Esophagus muscularis mucosa (tissue), 4 donors: ENCODE measurements at regions of chr11 and their contacts with region 1.

Region 1: GRCh38 chr11:17230867-17231851 is 23.4 kb upstream of the PIK3C2A start:
- DNase-seq: no peak
- H3K4me3 ChIP-seq: no peak overlapping the region
- H3K27ac ChIP-seq: no peak overlapping the region
- H3K4me1 ChIP-seq: peaks cover 0 to 8% (median 0%) of the 10 kb centered on the region in 4 donors
- H3K27me3 ChIP-seq: no peaks in the 10 kb centered on the region
- CTCF ChIP-seq: no peak
- EP300 ChIP-seq: no peak
- POLR2A ChIP-seq: no peak

Region 2: DNA sequence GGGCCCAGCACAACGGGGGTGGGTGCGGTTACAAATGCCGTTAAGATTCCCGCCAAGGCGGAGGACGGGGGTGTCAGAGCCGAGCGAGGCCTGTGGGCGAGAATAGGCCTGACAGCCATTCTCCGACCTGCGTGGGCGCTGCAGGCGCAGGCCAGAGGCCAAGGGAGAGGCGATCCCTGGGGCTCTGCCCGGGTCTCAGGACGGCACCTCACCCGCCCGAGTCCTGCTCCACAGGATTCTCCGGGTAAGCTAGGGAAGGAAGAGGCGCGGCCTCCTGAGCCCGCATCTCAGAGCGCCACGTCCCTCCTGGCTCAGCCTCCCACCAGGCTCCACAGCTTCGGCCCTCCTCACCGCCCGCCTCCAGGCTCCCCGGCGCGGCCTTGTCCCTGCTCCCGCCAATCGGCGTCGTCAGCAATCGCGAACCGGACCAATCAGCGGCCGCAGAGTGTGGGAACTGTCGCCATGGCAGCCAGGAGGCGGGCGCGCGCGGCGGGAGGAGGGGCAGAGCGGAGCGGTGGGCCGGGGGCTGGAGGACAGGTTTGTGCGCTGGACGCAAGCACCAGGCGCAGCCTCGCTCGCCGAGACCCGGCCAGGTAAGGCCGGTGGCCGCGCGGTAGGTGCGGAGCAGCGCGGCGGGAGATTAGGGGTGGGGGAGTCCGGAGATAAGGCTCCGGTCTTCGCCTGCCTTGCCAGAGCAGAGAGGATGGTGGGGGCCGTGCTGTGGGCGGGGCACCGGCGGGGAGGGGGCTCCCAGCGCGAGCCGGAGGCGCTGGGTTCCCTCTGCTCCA is 45.3 kb after region 1 on chr11 and contains the start of gene NUCB2:
- intact Hi-C with region 1: loop called (anchors 5 kb)
- DNase-seq: peak; percentile 97
- H3K4me3 ChIP-seq: peak within 1 kb of the TSS; percentile 77 to 98 (median 94)
- H3K27ac ChIP-seq: peak within 1 kb of the TSS; percentile 86 to 95 (median 95)
- H3K4me1 ChIP-seq: peaks cover 8 to 20% (median 15%) of the 10 kb centered on the region in 4 donors
- H3K27me3 ChIP-seq: no peaks in the 10 kb centered on the region
- CTCF ChIP-seq: peak in 1 of 3 experiments; percentile 16
- EP300 ChIP-seq: no peak
- POLR2A ChIP-seq: no peak
- total RNA-seq, gene NUCB2: 34.3 to 43.8 (median 42.6) TPM

Region 3: DNA sequence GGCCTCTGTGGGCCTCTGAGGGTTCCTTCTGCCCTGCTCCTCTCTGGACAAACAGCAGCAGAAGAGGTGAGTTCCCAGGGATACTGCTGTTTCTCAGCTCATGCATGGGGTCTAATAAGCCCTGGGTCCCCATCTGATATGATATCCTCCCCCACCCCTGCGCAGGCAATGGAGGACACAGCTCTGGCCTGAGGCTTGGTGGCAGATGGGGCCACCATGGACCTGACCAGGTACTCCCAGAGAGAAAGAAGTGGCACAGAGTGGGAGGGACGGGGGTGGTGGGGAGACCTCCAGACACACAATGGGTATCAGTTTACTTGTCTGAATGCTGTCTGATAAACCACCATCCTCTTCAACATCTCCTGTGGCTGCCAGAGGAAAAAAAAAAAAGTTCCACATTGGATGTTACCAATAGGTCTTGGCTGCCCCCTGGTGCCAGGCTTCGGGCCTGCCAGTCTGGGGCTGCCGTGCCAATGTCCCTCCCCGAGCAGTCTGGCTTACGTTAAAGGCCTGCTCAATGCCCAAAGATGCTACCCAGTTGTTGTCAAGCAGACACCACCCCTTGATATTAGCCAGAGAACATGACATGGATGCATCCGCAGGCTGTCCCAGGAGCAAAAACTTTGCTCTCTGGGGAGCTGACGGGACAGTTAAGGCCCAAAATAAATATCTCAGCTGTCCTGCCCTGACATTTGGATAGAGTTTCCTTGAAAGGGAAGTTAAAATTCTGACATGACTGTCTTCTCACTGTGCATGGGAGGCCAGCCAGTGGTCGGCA is 273.4 kb after region 1 on chr11:
- intact Hi-C with region 1: loop called (anchors 5 kb)
- DNase-seq: no peak
- H3K4me3 ChIP-seq: no peak overlapping the region
- H3K27ac ChIP-seq: no peak overlapping the region
- H3K4me1 ChIP-seq: peaks cover 17 to 20% (median 18%) of the 10 kb centered on the region in 4 donors
- H3K27me3 ChIP-seq: peaks cover 0 to 7% (median 0%) of the 10 kb centered on the region in 4 donors
- CTCF ChIP-seq: peak; percentile 90 to 93 (median 92)
- EP300 ChIP-seq: no peak
- POLR2A ChIP-seq: no peak